A673 (cell line): ENCODE measurements at regions of chr1 and their contacts with region 1.

Region 1: DNA sequence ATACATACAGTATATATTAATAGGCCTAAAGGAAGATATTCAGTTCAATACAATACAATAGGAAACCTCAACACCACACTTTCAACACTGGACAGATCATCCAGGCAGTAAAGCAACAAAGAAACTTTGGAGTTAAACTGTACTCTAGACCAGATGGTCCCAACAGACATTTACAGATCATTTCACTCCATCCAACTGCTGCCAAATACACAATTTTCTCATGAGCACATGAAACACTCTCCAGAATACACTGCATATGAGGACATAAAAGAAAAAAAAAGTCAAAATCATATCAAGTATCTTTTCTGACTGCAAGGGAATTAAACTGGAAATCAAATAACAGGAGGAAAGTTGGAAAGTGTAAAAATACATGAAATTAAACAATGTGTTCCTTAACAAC is 607.5 kb upstream of the BRINP3 start:
- DNase-seq: no peak
- H3K4me3 ChIP-seq: no peak overlapping the region
- H3K27ac ChIP-seq: no peak overlapping the region
- H3K4me1 ChIP-seq: no peaks in the 10 kb centered on the region
- H3K27me3 ChIP-seq: no peaks in the 10 kb centered on the region
- CTCF ChIP-seq: no peak

Region 2: DNA sequence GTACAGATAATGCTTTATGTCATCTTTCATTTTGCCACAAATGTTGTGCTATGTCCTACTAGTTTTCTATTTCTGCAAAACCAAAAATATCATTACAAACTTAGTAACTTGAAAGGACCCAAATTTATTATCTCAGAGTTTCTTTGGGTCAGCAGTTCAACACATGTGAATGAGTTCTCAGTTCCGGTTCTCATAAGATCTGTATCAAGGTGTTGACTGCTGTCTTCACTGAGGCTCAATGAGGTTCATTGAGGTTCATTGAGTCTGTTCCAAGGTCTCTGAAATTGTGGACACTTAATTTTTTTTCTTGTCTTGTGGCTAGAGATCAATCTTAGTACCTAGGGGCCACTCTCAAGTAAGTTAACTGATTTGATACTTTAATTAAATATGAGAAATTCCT is 82.4 kb before region 1 on chr1:
- CTCF ChIA-PET with region 1: no interaction called
- POLR2A ChIA-PET with region 1: no interaction called
- intact Hi-C with region 1: no loop called
- DNase-seq: no peak
- H3K4me3 ChIP-seq: no peak overlapping the region
- H3K27ac ChIP-seq: no peak overlapping the region
- H3K4me1 ChIP-seq: no peaks in the 10 kb centered on the region
- H3K27me3 ChIP-seq: no peaks in the 10 kb centered on the region
- CTCF ChIP-seq: no peak

Region 3: GRCh38 chr1:191065771-191066170 is 19.4 kb before region 1 on chr1:
- CTCF ChIA-PET with region 1: no interaction called
- POLR2A ChIA-PET with region 1: no interaction called
- intact Hi-C with region 1: loop called (anchors 2 kb)
- DNase-seq: no peak
- H3K4me3 ChIP-seq: no peak overlapping the region
- H3K27ac ChIP-seq: no peak overlapping the region
- H3K4me1 ChIP-seq: no peaks in the 10 kb centered on the region
- H3K27me3 ChIP-seq: no peaks in the 10 kb centered on the region
- CTCF ChIP-seq: no peak